Activated CD8-positive, alpha-beta T cell treated with anti-CD3 and anti-CD28 coated beads for 36 hours (primary cell): ENCODE measurements at regions of chr1 and their contacts with region 1.

Region 1: DNA sequence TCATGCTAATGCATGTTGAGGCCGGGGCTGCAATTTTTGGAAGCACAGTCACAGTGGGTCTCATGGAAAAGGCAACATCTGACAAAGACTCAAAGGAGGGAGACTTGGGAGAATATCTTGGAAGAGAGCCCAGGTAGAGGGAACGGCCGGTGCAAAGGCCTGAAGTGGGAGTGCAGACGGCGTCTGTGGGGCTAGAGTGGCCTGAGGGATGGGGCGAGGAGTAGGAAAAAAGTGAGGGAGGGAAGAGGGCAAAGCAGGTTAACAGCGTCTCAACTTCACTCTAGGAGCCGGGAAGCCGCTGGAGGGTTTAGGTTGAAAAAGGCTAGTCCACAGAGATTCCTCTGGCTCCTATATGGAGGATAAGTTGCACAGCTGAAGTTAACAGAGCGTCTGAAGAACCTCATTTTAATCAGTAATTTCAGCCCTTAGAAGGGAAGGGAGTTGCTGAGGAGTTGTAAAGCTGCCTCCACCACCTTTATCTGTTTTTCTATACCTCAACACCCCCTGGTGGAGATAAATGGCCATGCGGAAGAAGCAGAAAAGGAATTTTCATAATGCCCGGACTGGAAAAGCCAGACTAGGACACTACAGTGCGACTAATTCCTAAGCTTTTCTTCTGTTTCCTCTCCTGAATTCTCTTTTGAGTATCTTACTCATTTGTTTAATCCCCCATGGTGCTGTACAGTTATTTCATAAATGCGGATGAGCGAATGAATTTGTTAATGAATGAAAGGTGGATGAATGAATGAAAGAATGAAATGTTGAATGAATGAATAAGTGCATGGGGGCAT is 78.7 kb upstream of the ZNF281 start:
- DNase-seq: peak; percentile 60
- ATAC-seq: peak; percentile 73
- H3K4me3 Mint-ChIP-seq: no peak overlapping the region
- H3K27ac Mint-ChIP-seq: no peak overlapping the region
- H3K4me1 Mint-ChIP-seq: peaks cover 5% of the 10 kb centered on the region
- H3K27me3 Mint-ChIP-seq: peaks cover 13% of the 10 kb centered on the region
- CTCF ChIP-seq: peak; percentile 91

Region 2: DNA sequence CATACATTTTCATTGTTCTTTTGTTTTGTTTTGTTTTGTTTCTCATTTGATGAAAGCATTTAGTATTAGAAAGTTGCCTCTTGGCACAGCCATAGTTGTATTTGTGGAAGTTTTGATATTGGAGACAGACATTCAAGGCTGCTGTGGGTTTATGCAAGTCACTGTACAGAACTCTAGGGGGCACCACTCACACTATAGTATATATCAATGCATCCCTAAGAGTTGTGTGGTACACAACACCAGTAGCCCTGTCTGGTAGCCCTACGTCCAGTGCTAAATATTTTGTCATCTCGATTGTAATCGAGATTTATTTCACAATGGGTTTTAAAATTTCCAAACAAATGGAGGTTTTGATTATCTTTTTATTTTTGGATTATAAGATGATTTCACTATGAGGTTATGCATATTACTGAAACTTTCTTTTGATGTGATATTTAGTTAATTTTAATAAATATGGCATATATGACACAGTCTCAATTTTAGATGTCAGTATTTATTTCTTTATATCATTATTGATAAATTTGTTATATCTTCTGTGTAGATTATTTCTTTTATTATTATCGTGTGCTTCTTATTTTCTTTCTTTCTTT is 348.8 kb before region 1 on chr1:
- CTCF ChIA-PET with region 1: no interaction called
- POLR2A ChIA-PET with region 1: no interaction called
- intact Hi-C with region 1: loop called (anchors 2 kb)
- DNase-seq: peak; percentile 45
- ATAC-seq: peak; percentile 85
- H3K4me3 Mint-ChIP-seq: no peak overlapping the region
- H3K27ac Mint-ChIP-seq: no peak overlapping the region
- H3K4me1 Mint-ChIP-seq: no peaks in the 10 kb centered on the region
- H3K27me3 Mint-ChIP-seq: no peaks in the 10 kb centered on the region
- CTCF ChIP-seq: peak; percentile 90

Region 3: GRCh38 chr1:200279810-200280411 is 208.7 kb before region 1 on chr1:
- CTCF ChIA-PET with region 1: interaction called, 31 read pairs
- POLR2A ChIA-PET with region 1: no interaction called
- intact Hi-C with region 1: loop called (anchors 5 kb)
- DNase-seq: peak; percentile 51
- ATAC-seq: no peak
- H3K4me3 Mint-ChIP-seq: no peak overlapping the region
- H3K27ac Mint-ChIP-seq: no peak overlapping the region
- H3K4me1 Mint-ChIP-seq: no peaks in the 10 kb centered on the region
- H3K27me3 Mint-ChIP-seq: peaks cover 2% of the 10 kb centered on the region
- CTCF ChIP-seq: peak; percentile 74

Region 4: GRCh38 chr1:200409761-200410565 is 78.6 kb before region 1 on chr1 and contains the start of gene ZNF281:
- CTCF ChIA-PET with region 1: interaction called, 3 read pairs
- POLR2A ChIA-PET with region 1: no interaction called
- intact Hi-C with region 1: loop called (anchors 10 kb)
- DNase-seq: peak; percentile 97
- ATAC-seq: peak; percentile 99
- H3K4me3 Mint-ChIP-seq: peak within 1 kb of the TSS; percentile 84
- H3K27ac Mint-ChIP-seq: peak within 1 kb of the TSS; percentile 93
- H3K4me1 Mint-ChIP-seq: peaks cover 48% of the 10 kb centered on the region
- H3K27me3 Mint-ChIP-seq: no peaks in the 10 kb centered on the region
- CTCF ChIP-seq: no peak
- total RNA-seq, gene ZNF281: 12.0 to 12.2 TPM

Region 5: GRCh38 chr1:200538179-200538578 is 49.6 kb after region 1 on chr1:
- CTCF ChIA-PET with region 1: no interaction called
- POLR2A ChIA-PET with region 1: no interaction called
- intact Hi-C with region 1: no loop called
- DNase-seq: no peak
- ATAC-seq: no peak
- H3K4me3 Mint-ChIP-seq: no peak overlapping the region
- H3K27ac Mint-ChIP-seq: no peak overlapping the region
- H3K4me1 Mint-ChIP-seq: no peaks in the 10 kb centered on the region
- H3K27me3 Mint-ChIP-seq: no peaks in the 10 kb centered on the region
- CTCF ChIP-seq: no peak